Esophagus muscularis mucosa (tissue), 4 donors: ENCODE measurements at regions of chr3 and their contacts with region 1.

Region 1: DNA sequence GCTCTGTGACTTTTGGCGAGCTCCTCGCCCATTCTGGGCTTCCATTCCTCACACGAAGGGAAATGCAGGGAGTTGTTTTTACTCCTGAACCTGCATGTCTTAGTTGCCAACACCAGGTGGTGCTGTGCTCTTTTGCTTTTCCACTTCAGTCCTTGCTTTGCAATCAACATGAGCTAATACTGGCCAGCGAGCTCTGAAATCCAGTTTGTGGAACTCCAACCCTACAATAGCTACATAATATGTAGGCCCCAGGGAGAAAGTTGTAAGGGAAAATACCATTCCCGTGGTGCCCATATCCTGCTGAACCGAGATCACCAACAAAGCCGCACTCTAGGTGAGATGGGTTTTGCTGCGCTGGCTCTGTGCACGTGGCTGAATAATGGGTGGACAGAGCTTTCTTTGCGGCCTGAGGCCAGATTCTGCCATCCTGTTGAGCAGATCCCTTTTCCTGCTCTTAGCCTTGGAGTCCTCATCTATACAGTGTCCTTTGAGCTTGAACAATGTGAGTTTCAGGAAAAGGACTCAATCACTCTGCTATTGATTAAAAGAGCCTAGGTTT is 25.0 kb downstream of the LSM3 start:
- DNase-seq: no peak
- H3K4me3 ChIP-seq: no peak overlapping the region
- H3K27ac ChIP-seq: peak overlapping the region in 1 of 4 donors; percentile 51
- H3K4me1 ChIP-seq: peaks cover 8 to 27% (median 16%) of the 10 kb centered on the region in 4 donors
- H3K27me3 ChIP-seq: no peaks in the 10 kb centered on the region
- CTCF ChIP-seq: peak; percentile 76 to 85 (median 82)
- EP300 ChIP-seq: no peak
- POLR2A ChIP-seq: no peak

Region 2: DNA sequence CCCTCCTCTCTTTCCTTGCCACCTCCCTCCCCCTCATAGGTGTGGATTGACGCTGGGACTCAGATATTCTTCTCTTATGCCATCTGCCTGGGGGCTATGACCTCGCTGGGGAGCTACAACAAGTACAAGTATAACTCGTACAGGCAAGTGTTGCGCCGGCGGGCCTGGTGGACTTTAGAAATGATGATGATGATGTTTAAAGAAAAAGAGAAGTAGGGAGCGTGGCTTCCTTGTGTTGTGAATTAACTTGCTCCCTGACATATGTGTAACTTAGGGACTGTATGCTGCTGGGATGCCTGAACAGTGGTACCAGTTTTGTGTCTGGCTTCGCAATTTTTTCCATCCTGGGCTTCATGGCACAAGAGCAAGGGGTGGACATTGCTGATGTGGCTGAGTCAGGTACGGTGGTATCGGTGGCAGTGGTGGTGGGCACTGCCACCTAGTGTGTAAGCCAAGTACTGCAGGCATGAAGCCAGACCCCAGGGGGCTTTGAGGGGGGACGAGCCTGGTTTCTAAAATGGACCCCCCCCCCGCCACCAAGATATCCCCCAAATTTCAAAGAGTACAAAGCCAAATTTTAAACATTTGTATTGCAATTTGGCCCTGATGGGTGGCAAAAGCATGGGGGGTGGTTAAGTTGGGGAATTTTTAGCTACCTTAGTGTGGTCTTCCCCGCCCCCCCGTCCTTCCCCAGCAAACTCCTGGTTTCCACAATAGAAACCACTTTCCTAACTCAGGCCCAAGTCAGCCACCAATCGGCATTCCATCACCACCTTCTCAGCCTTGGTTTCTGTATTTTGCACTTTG is 264.4 kb after region 1 on chr3:
- intact Hi-C with region 1: loop called (anchors 2 kb)
- DNase-seq: no peak
- H3K4me3 ChIP-seq: no peak overlapping the region
- H3K27ac ChIP-seq: no peak overlapping the region
- H3K4me1 ChIP-seq: peaks cover 0 to 8% (median 5%) of the 10 kb centered on the region in 4 donors
- H3K27me3 ChIP-seq: no peaks in the 10 kb centered on the region
- CTCF ChIP-seq: peak; percentile 86 to 95 (median 92)
- EP300 ChIP-seq: no peak
- POLR2A ChIP-seq: no peak